ENCODE measurements at regions of chr4 and their contacts with region 1.

Region 1: DNA sequence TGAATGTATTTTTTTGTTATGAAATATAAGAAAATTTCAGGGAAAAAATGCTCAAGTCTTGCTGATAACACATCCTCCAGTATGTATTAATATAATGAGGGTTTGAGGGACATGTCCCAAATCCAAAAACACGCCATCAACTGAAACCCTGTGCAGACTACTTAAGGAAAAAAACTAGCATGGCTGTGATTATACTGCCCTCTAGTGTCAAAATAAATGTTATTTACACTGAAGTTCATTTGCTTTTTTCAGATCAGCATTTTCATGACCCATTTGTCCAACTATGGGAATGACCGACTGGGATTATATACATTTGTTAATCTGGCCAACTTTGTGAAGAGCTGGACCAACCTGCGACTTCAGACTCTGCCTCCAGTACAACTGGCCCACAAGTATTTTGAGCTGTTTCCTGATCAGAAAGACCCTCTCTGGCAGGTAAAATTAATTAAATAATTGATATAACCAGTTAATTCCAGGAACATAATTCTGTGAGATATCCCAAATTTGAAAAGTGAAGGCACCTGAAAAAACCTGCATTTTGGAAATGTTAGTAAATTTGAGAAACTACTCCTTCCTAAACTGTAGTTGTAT is 128.5 kb downstream of the PRSS12 start:
- DNase-seq: peak; percentile 43
- ATAC-seq: peak; percentile 64
- H3K4me3 ChIP-seq: no peak overlapping the region
- H3K27ac ChIP-seq: no peak overlapping the region
- H3K4me1 ChIP-seq: no peaks in the 10 kb centered on the region
- H3K27me3 ChIP-seq: no peaks in the 10 kb centered on the region
- CTCF ChIP-seq: peak; percentile 66
- EP300 ChIP-seq: no peak
- POLR2A ChIP-seq: no peak
- RAD21 ChIP-seq: peak; percentile 30; the same call in 1 of the 2 replicates

Region 2: DNA sequence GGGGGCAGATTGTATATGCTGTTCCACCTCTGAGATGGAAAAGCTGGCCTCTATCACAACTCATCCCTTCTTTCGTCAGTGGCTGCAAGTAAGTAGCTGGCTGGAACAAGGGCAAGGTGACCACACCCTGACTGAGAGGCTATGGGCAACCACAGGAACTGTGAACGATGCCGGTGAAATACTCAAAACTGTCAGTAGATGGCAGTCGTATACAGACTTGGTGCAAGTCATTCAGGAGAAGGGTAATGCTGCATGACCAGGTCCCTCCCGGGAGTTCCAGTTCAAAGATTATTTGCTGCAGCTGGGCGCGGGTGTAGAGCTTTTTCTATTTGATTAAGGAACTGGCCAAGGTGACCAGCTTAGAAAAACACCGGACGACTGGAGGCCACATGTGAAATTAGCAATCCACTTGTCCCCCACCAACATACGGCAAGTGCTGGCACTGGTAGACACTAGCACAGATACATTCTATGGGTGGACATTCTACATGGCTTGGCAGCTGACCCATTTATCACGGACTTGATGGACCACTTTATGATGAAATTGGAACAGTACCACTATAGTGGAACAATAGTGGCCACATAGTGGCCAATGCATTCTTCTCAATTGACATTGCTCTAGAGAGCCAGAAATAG is 1865.6 kb before region 1 on chr4:
- CTCF ChIA-PET with region 1: no interaction called
- POLR2A ChIA-PET with region 1: no interaction called
- in situ Hi-C with region 1: no loop called
- intact Hi-C with region 1: loop called (anchors 5 kb)
- DNase-seq: peak; percentile 82
- ATAC-seq: peak; percentile 98
- H3K4me3 ChIP-seq: no peak overlapping the region
- H3K27ac ChIP-seq: no peak overlapping the region
- H3K4me1 ChIP-seq: no peaks in the 10 kb centered on the region
- H3K27me3 ChIP-seq: no peaks in the 10 kb centered on the region
- CTCF ChIP-seq: peak; percentile 90
- EP300 ChIP-seq: no peak
- POLR2A ChIP-seq: no peak
- RAD21 ChIP-seq: peak; percentile 52; the same call in 1 of the 2 replicates

Region 3: GRCh38 chr4:117134386-117134785 is 1089.9 kb before region 1 on chr4:
- CTCF ChIA-PET with region 1: interaction called, 3 read pairs
- POLR2A ChIA-PET with region 1: no interaction called
- in situ Hi-C with region 1: loop called (anchors 25 kb)
- intact Hi-C with region 1: no loop called
- DNase-seq: peak; percentile 20
- ATAC-seq: peak; percentile 70
- H3K4me3 ChIP-seq: no peak overlapping the region
- H3K27ac ChIP-seq: no peak overlapping the region
- H3K4me1 ChIP-seq: no peaks in the 10 kb centered on the region
- H3K27me3 ChIP-seq: no peaks in the 10 kb centered on the region
- CTCF ChIP-seq: peak; percentile 62
- EP300 ChIP-seq: no peak
- POLR2A ChIP-seq: no peak
- RAD21 ChIP-seq: no peak

Region 4: DNA sequence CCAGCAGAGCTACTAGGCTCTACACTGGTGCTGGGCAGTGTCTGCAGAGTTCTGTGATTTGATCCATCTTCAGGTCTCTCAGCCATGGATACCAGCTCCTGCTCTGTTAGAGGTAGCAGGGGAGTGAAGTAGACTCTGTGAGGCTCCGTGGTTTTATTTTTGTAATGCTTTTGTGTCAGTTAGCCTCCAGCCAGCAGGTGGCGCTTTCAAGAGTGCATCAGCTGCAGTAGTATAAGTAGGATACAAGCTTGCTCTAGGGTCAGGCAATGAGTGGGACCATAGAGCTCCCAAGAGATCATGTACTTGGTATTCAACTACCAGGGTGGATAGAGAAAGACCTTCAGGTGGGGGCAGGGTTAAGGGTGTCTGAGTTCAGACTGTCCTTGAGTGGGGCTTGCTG is 776.4 kb before region 1 on chr4:
- CTCF ChIA-PET with region 1: no interaction called
- POLR2A ChIA-PET with region 1: no interaction called
- in situ Hi-C with region 1: no loop called
- intact Hi-C with region 1: loop called (anchors 1 kb)
- DNase-seq: peak; percentile 12
- ATAC-seq: peak; percentile 62; the same call in 2 of the 3 replicates
- H3K4me3 ChIP-seq: no peak overlapping the region
- H3K27ac ChIP-seq: no peak overlapping the region
- H3K4me1 ChIP-seq: no peaks in the 10 kb centered on the region
- H3K27me3 ChIP-seq: no peaks in the 10 kb centered on the region
- CTCF ChIP-seq: peak; percentile 41
- EP300 ChIP-seq: no peak
- POLR2A ChIP-seq: no peak
- RAD21 ChIP-seq: no peak

Region 5: GRCh38 chr4:118076958-118077766 is 147.2 kb before region 1 on chr4:
- CTCF ChIA-PET with region 1: interaction called, 8 read pairs
- POLR2A ChIA-PET with region 1: no interaction called
- in situ Hi-C with region 1: no loop called
- intact Hi-C with region 1: loop called (anchors 1 kb)
- DNase-seq: peak; percentile 31
- ATAC-seq: peak; percentile 91
- H3K4me3 ChIP-seq: no peak overlapping the region
- H3K27ac ChIP-seq: no peak overlapping the region
- H3K4me1 ChIP-seq: no peaks in the 10 kb centered on the region
- H3K27me3 ChIP-seq: no peaks in the 10 kb centered on the region
- CTCF ChIP-seq: peak; percentile 67
- EP300 ChIP-seq: no peak
- POLR2A ChIP-seq: no peak
- RAD21 ChIP-seq: no peak

Region 6: DNA sequence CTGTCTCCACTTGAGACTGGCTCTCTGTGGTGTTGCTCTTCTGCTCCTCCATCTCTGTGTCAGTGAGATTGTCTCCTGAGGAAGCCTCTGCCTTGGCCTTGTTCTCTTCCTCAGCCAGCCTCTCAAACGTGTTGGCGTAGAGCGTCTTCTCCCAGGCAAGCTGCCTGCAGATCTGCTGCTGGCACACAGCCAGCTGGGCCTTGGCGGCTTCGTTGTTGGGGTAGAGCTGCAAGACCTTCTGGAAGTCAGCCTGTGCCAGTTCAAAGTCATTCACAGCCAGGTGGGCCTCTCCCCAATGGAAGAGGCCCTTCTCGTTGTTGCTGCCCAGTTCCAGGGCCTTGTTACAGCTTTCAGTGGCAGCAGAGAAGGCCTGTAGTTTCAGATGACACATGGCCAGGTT is 30.9 kb before region 1 on chr4:
- CTCF ChIA-PET with region 1: no interaction called
- POLR2A ChIA-PET with region 1: no interaction called
- in situ Hi-C with region 1: no loop called
- intact Hi-C with region 1: loop called (anchors 1 kb)
- DNase-seq: no peak
- ATAC-seq: no peak
- H3K4me3 ChIP-seq: no peak overlapping the region
- H3K27ac ChIP-seq: no peak overlapping the region
- H3K4me1 ChIP-seq: no peaks in the 10 kb centered on the region
- H3K27me3 ChIP-seq: no peaks in the 10 kb centered on the region
- CTCF ChIP-seq: no peak
- EP300 ChIP-seq: no peak
- POLR2A ChIP-seq: no peak
- RAD21 ChIP-seq: no peak

Region 7: GRCh38 chr4:118270492-118270891 is 46.2 kb after region 1 on chr4:
- CTCF ChIA-PET with region 1: no interaction called
- POLR2A ChIA-PET with region 1: no interaction called
- in situ Hi-C with region 1: no loop called
- intact Hi-C with region 1: loop called (anchors 2 kb)
- DNase-seq: peak; percentile 41
- ATAC-seq: no peak
- H3K4me3 ChIP-seq: no peak overlapping the region
- H3K27ac ChIP-seq: no peak overlapping the region
- H3K4me1 ChIP-seq: no peaks in the 10 kb centered on the region
- H3K27me3 ChIP-seq: no peaks in the 10 kb centered on the region
- CTCF ChIP-seq: peak; percentile 56
- EP300 ChIP-seq: no peak
- POLR2A ChIP-seq: no peak
- RAD21 ChIP-seq: peak; percentile 19; the same call in 1 of the 2 replicates